ENCODE measurements at regions of chr16 and their contacts with region 1.

Region 1: DNA sequence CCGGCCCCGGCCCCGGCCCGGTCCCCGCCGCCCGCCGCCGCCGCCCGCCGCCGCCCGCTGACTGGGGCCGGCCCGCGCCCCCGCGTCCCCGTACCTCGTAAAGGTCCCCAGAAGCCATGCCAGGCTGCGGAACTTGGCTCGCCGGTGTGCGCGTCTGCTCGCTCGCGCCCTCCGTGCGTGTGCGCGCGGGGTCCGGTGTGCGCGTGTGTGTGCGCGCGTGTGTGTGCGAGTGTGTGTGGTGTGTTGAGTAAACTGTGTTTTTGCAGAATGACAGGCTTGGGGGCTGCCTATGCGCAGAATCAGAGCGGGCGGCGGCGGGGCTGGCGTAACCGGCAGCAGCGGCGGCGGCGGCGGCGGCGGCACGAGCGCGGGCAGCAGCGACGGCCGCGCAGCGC is 345 bp downstream of the CDYL2 start:
- DNase-seq: peak; percentile 51
- H3K4me3 ChIP-seq: peak overlapping the region; percentile 43 to 93 (median 50)
- H3K27ac ChIP-seq: peak overlapping the region; percentile 70
- H3K4me1 ChIP-seq: peaks cover 35% of the 10 kb centered on the region
- H3K27me3 ChIP-seq: no peaks in the 10 kb centered on the region
- CTCF ChIP-seq: no peak
- POLR2A ChIP-seq: no peak

Region 2: DNA sequence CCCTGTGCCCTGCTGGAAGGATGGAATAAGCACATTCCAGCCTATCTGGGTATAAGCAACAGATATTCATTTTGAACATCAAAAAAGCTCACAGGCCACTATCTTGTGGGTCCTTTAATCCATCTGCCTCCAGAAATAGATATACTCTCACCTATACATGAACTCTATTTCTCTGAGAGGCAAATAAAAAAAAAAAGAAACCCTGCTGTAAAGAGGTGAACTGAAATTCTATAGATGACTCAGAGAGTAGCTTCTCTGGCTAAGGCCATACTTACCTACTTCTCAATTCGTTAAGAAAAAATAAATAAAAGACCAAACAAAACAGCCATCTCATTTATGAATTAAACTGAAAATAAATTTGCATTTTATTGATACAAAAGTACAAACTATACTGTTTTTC is 176.9 kb before region 1 on chr16:
- CTCF ChIA-PET with region 1: no interaction called
- POLR2A ChIA-PET with region 1: no interaction called
- dilution Hi-C with region 1: no loop called
- intact Hi-C with region 1: loop called (anchors 10 kb)
- DNase-seq: no peak
- H3K4me3 ChIP-seq: no peak overlapping the region
- H3K27ac ChIP-seq: no peak overlapping the region
- H3K4me1 ChIP-seq: peaks cover 12% of the 10 kb centered on the region
- H3K27me3 ChIP-seq: no peaks in the 10 kb centered on the region
- CTCF ChIP-seq: no peak
- POLR2A ChIP-seq: no peak

Region 3: DNA sequence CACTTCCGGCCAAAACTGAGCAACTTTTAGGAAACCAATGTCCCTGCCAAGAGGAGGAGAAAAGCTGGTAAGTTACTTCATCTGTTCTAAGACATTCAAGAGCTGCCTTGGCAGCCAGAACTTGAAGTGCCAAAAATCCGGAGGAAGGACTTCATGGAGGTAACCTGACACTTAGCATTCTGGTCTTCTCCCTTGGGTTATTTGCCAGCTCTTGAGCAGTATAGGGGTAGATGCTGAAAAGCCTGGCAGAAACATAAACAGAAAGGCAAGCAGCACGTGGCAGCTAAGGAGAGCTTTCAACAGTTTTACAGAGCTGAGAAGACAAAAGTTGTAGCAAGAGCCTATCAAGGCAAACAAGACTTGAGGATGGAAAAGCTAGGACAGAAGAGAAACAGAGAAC is 52.9 kb before region 1 on chr16:
- CTCF ChIA-PET with region 1: interaction called, 3 read pairs
- POLR2A ChIA-PET with region 1: no interaction called
- dilution Hi-C with region 1: no loop called
- intact Hi-C with region 1: loop called (anchors 2 kb)
- DNase-seq: peak; percentile 51
- H3K4me3 ChIP-seq: no peak overlapping the region
- H3K27ac ChIP-seq: no peak overlapping the region
- H3K4me1 ChIP-seq: peaks cover 13% of the 10 kb centered on the region
- H3K27me3 ChIP-seq: no peaks in the 10 kb centered on the region
- CTCF ChIP-seq: no peak
- POLR2A ChIP-seq: no peak

Region 4: DNA sequence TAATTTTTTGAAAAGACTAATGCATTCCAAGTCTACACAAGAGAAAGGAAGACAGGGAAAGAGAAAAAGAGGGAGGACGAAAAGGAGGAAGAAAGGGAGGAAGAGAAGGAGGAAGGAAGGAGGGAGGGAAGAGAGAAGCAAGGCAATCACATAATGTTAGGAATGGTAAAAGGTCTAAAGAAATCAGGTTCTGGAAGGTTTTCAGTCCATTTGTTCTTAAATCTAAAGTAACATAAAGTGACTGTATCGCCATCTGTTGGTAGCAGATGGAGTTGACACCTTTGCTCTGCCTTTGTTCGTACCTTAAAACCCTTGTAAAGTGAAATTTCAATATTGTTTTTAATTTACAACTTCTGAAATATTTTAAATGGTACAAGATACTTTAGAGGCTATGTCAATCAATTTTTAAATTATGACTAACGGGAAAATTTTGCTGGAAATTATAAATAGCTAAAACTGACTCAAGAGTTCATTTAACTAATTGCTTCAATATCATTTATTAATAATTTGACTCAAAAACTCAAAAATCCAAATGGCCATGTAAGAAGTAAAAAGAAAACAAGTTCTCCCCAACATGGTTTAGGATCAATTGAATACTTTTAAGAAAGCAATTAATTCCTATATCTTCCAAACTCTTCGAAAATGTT is 20.8 kb after region 1 on chr16:
- CTCF ChIA-PET with region 1: interaction called, 12 read pairs
- POLR2A ChIA-PET with region 1: no interaction called
- dilution Hi-C with region 1: no loop called
- intact Hi-C with region 1: loop called (anchors 1 kb)
- DNase-seq: peak; percentile 79
- H3K4me3 ChIP-seq: no peak overlapping the region
- H3K27ac ChIP-seq: no peak overlapping the region
- H3K4me1 ChIP-seq: no peaks in the 10 kb centered on the region
- H3K27me3 ChIP-seq: no peaks in the 10 kb centered on the region
- CTCF ChIP-seq: peak; percentile 52 to 56
- POLR2A ChIP-seq: no peak

Region 5: GRCh38 chr16:80938035-80938865 is 134.2 kb after region 1 on chr16:
- CTCF ChIA-PET with region 1: no interaction called
- POLR2A ChIA-PET with region 1: no interaction called
- dilution Hi-C with region 1: no loop called
- intact Hi-C with region 1: loop called (anchors 1 kb)
- DNase-seq: peak; percentile 98
- H3K4me3 ChIP-seq: peak overlapping the region in 2 of 3 experiments; percentile 16 to 27
- H3K27ac ChIP-seq: peak overlapping the region; percentile 98
- H3K4me1 ChIP-seq: peaks cover 45% of the 10 kb centered on the region
- H3K27me3 ChIP-seq: no peaks in the 10 kb centered on the region
- CTCF ChIP-seq: no peak
- POLR2A ChIP-seq: peak; percentile 86